ENCODE measurements at regions of chr2 and their contacts with region 1.

Region 1: GRCh38 chr2:17792515-17792914 is 23.7 kb upstream of the MSGN1 start:
- DNase-seq: no peak
- ATAC-seq: no peak
- H3K4me3 Mint-ChIP-seq: no peak overlapping the region
- H3K27ac Mint-ChIP-seq: no peak overlapping the region
- H3K4me1 Mint-ChIP-seq: peaks cover 29% of the 10 kb centered on the region
- H3K27me3 Mint-ChIP-seq: no peaks in the 10 kb centered on the region
- CTCF ChIP-seq: no peak

Region 2: GRCh38 chr2:17736989-17737388 is 55.5 kb before region 1 on chr2:
- CTCF ChIA-PET with region 1: no interaction called
- POLR2A ChIA-PET with region 1: no interaction called
- intact Hi-C with region 1: no loop called
- DNase-seq: no peak
- ATAC-seq: no peak
- H3K4me3 Mint-ChIP-seq: no peak overlapping the region
- H3K27ac Mint-ChIP-seq: peak overlapping the region; percentile 24
- H3K4me1 Mint-ChIP-seq: peaks cover 10% of the 10 kb centered on the region
- H3K27me3 Mint-ChIP-seq: no peaks in the 10 kb centered on the region
- CTCF ChIP-seq: no peak

Region 3: GRCh38 chr2:17804358-17804757 is 11.8 kb after region 1 on chr2:
- CTCF ChIA-PET with region 1: no interaction called
- POLR2A ChIA-PET with region 1: interaction called, 20 read pairs
- intact Hi-C with region 1: loop called (anchors 1 kb)
- DNase-seq: no peak
- ATAC-seq: peak; percentile 82
- H3K4me3 Mint-ChIP-seq: peak overlapping the region; percentile 76
- H3K27ac Mint-ChIP-seq: peak overlapping the region; percentile 97
- H3K4me1 Mint-ChIP-seq: peaks cover 84% of the 10 kb centered on the region
- H3K27me3 Mint-ChIP-seq: no peaks in the 10 kb centered on the region
- CTCF ChIP-seq: no peak

Region 4: GRCh38 chr2:17813742-17814473 is 21.4 kb after region 1 on chr2:
- CTCF ChIA-PET with region 1: no interaction called
- POLR2A ChIA-PET with region 1: interaction called, 12 read pairs
- intact Hi-C with region 1: no loop called
- DNase-seq: peak; percentile 56
- ATAC-seq: peak; percentile 82
- H3K4me3 Mint-ChIP-seq: peak overlapping the region; percentile 81
- H3K27ac Mint-ChIP-seq: peak overlapping the region; percentile 97
- H3K4me1 Mint-ChIP-seq: peaks cover 81% of the 10 kb centered on the region
- H3K27me3 Mint-ChIP-seq: no peaks in the 10 kb centered on the region
- CTCF ChIP-seq: no peak

Region 5: GRCh38 chr2:17821535-17822444 is 29.3 kb after region 1 on chr2:
- CTCF ChIA-PET with region 1: interaction called, 3 read pairs
- POLR2A ChIA-PET with region 1: no interaction called
- intact Hi-C with region 1: loop called (anchors 5 kb)
- DNase-seq: no peak
- ATAC-seq: peak; percentile 29
- H3K4me3 Mint-ChIP-seq: peak overlapping the region; percentile 42
- H3K27ac Mint-ChIP-seq: peak overlapping the region; percentile 88
- H3K4me1 Mint-ChIP-seq: peaks cover 84% of the 10 kb centered on the region
- H3K27me3 Mint-ChIP-seq: no peaks in the 10 kb centered on the region
- CTCF ChIP-seq: no peak